Right ventricle myocardium inferior (tissue), 1 donor: ENCODE measurements at regions of chr6 and their contacts with region 1.

Region 1: DNA sequence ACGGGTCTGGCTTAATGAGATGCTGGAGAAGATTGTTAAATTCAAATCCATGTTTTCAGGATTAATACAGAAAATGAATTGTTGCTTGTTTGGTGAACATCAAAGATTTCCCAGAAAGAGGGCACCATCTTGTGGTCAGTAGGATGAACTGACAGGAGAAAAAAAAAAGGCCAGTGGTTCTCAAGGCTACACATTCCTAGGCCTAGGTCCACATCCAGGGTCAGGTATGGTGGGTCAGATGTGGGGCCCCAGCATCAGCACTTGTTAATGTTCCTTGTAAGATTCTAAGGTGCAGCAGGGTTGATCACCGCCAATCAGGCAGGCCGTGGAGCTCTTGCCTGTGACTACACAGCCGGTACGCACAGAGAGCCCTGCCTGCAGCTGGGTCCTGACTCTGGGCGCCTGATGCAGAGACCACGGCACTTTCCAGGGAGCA is 34.0 kb upstream of the FOXO3 start:
- DNase-seq: no peak
- ATAC-seq: peak; percentile 39

Region 2: GRCh38 chr6:107977283-107977682 is 549.5 kb before region 1 on chr6:
- intact Hi-C with region 1: loop called (anchors 5 kb)
- DNase-seq: no peak
- ATAC-seq: no peak

Region 3: GRCh38 chr6:108592371-108593337 is 65.9 kb after region 1 on chr6:
- intact Hi-C with region 1: no loop called
- DNase-seq: no peak
- ATAC-seq: peak; percentile 40